A673 (cell line): ENCODE measurements at regions of chr7 and their contacts with region 1.

Region 1: GRCh38 chr7:26061688-26062150 is 90.3 kb upstream of the NFE2L3 start:
- DNase-seq: peak; percentile 78
- H3K4me3 ChIP-seq: no peak overlapping the region
- H3K27ac ChIP-seq: no peak overlapping the region
- H3K4me1 ChIP-seq: peaks cover 25% of the 10 kb centered on the region
- H3K27me3 ChIP-seq: no peaks in the 10 kb centered on the region
- CTCF ChIP-seq: peak; percentile 92

Region 2: DNA sequence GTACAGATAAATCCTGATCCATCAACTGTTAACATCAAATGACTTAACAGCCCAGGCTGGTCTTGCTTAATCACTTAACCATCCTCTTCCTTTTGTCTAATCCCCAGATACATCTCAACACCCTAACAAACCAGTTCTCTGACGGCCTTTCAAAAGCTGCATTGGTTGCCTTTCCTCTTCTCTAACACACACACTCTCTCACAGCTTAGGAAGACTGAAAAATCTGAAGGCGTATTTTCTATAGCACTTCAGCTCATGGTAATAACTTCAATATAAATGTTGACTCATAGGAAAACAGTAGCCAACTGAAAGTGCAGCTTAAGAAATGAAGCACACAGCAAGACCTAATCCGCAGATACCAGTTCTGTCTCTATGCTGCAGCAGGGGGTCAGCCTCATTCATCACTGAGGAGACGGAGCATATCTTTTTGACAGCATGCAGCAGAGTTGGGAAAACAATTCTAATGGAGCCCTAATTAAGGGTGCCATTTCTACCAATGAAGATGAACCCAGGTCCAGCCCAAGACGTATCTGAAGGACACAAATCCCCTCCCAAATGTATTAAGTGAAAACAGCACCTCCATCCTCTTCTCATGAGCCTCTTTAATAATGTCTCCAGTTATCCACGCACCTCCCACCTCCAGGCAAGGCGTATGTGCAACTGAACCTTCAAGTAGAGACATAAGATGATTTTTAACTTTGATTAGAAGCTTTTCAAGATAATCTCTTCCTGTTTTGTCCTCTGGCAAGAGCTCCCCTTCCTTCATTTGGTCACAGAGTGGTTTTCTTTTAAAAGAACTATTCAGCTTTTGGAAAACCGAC is 121.4 kb before region 1 on chr7:
- CTCF ChIA-PET with region 1: no interaction called
- POLR2A ChIA-PET with region 1: no interaction called
- intact Hi-C with region 1: loop called (anchors 1 kb)
- DNase-seq: peak; percentile 98
- H3K4me3 ChIP-seq: peak overlapping the region; percentile 31
- H3K27ac ChIP-seq: peak overlapping the region; percentile 89
- H3K4me1 ChIP-seq: peaks cover 32% of the 10 kb centered on the region
- H3K27me3 ChIP-seq: no peaks in the 10 kb centered on the region
- CTCF ChIP-seq: no peak

Region 3: GRCh38 chr7:25996006-25996408 is 65.7 kb before region 1 on chr7:
- CTCF ChIA-PET with region 1: interaction called, 10 read pairs
- POLR2A ChIA-PET with region 1: no interaction called
- intact Hi-C with region 1: no loop called
- DNase-seq: no peak
- H3K4me3 ChIP-seq: no peak overlapping the region
- H3K27ac ChIP-seq: no peak overlapping the region
- H3K4me1 ChIP-seq: no peaks in the 10 kb centered on the region
- H3K27me3 ChIP-seq: no peaks in the 10 kb centered on the region
- CTCF ChIP-seq: peak; percentile 25; the same call in 1 of the 2 replicates